Common myeloid progenitor, CD34-positive (primary cell): ENCODE measurements at regions of chr6 and their contacts with region 1.

Region 1: DNA sequence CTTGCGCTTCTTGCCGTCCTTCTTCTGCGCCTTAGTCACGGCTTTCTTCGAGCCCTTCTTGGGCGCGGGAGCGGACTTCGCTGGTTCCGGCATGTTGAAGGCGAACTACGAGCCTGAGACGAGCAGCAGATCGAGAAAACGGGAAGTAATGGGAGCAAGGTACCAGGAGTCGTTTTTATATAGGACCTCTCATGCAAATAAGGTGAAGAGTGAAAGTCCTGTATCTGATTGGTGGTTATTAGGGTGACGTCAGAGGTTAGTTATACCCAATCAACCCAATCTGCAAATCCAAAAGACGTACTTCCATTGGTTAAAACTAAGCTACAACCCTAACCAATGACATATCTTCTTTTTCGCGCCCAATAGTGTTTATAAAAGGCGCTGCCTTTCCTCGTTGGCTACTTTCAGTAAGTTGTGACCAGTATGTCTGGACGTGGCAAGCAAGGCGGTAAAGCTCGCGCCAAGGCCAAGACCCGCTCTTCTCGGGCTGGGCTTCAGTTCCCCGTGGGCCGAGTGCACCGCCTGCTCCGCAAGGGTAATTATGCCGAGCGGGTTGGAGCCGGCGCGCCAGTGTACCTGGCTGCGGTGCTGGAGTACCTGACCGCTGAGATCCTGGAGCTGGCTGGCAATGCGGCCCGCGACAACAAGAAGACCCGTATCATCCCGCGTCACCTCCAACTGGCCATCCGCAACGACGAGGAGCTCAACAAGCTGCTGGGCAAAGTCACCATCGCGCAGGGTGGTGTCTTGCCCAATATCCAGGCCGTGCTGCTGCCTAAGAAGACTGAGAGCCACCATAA is 100.6 kb upstream of the PRSS16 start:
- DNase-seq: peak; percentile 99 to 100 (median 99)
- H3K4me3 ChIP-seq: peak overlapping the region; percentile 61 to 97 (median 92)
- H3K27ac ChIP-seq: peak overlapping the region; percentile 46 to 92
- H3K4me1 ChIP-seq: peaks cover 11 to 37% (median 27%) of the 10 kb centered on the region in 4 experiments
- H3K27me3 ChIP-seq: no peaks in the 10 kb centered on the region

Region 2: DNA sequence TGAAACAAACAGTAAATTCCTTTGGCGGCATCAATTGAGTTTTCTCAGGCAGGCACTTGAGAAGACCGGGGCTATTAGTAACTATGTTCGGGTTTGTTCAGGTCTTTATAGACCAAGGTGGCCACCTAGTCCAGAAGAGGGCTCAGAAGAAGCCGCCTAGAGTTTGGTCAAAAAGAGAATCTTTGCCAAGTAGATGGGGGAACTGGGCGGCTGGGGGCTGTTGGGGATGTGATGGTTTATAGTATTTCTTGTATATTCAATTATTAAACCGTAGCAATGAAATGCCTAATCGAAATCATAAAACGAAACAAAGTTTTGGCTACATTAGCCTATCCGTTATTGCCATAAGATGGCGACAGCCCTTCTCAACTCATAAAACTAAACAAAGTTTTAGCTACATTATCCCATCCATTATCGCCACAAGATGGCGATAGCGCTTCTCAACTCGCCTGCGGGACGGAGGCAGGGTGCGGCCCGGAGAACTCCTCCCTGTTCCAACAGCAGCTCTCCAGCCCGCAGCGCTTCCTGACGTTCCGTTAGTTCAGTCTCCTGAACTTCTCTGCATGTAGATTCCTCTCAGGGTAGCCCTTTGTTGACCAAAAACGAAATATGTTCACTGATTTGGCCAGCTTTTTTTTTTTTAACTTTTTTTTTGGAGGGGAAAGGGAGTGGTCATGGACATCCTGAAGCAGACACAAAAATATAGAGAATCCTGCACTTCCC is 19.9 kb before region 1 on chr6:
- CTCF ChIA-PET with region 1: interaction called, 12 read pairs
- POLR2A ChIA-PET with region 1: interaction called, 46 read pairs
- DNase-seq: peak; percentile 90 to 91 (median 91)
- H3K4me3 ChIP-seq: peak overlapping the region in 6 of 7 experiments; percentile 60 to 78 (median 67)
- H3K27ac ChIP-seq: peak overlapping the region; percentile 2 to 90
- H3K4me1 ChIP-seq: peaks cover 10 to 36% (median 24%) of the 10 kb centered on the region in 4 experiments
- H3K27me3 ChIP-seq: no peaks in the 10 kb centered on the region

Region 3: GRCh38 chr6:27132532-27133280 is 14.2 kb before region 1 on chr6:
- CTCF ChIA-PET with region 1: interaction called, 12 read pairs
- POLR2A ChIA-PET with region 1: interaction called, 46 read pairs
- DNase-seq: peak; percentile 100
- H3K4me3 ChIP-seq: peak overlapping the region; percentile 68 to 92 (median 84)
- H3K27ac ChIP-seq: peak overlapping the region; percentile 50 to 90
- H3K4me1 ChIP-seq: peaks cover 11 to 72% (median 43%) of the 10 kb centered on the region in 4 experiments
- H3K27me3 ChIP-seq: no peaks in the 10 kb centered on the region